Naive thymus-derived CD8-positive, alpha-beta T cell (primary cell): ENCODE measurements at regions of chr14 and their contacts with region 1.

Region 1: GRCh38 chr14:24135834-24136542 is at the start of gene PSME1:
- DNase-seq: peak; percentile 88 to 96 (median 94)
- ATAC-seq: peak; percentile 88 to 94
- H3K4me3 Mint-ChIP-seq: peak within 1 kb of the TSS; percentile 87 to 98 (median 93)
- H3K27ac Mint-ChIP-seq: peak within 1 kb of the TSS; percentile 86 to 97 (median 94)
- H3K4me1 Mint-ChIP-seq: peaks cover 34 to 69% (median 66%) of the 10 kb centered on the region in 4 donors
- H3K27me3 Mint-ChIP-seq: no peaks in the 10 kb centered on the region
- polyA plus RNA-seq, gene PSME1: 681 to 767 (median 753) TPM

Region 2: DNA sequence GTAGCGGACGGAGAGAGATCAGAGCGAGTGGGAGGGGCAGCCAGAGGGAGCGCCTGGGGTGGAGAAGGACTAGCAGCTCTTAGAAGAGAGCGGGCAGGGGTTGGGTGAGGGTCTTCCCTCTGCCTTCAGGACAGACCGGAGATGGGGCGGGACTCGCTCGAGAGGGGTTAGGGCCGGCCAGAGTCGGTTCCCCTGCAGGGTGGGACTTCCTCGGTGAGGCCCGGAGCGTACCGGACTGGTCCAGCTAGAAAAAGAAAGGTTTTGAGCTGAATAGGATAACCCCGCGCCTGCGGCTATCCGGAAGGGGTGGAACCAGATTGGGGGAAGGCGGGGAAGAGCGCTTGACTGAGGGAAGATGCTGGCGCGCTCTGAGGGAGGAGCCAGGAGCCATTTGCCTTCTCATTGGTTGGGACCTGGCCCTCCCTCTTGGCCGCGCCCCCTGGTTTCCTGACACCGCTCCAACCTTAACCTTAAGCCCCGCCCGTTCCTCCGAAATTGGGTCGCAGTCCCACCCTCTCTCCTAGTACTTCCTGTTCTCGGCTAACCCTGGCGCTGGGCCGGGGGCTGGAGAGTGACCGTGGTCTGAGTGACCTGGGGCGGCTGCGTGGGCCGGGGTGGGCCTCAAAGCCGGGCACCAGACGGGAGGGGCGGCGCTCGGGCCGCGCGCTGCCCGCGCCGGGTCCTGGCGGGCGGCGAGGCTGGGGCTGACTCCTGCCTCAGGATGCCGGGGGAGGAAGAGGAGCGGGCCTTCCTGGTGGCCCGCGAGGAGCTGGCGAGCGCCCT is 11.2 kb after region 1 on chr14 and contains the start of gene RNF31:
- POLR2A ChIA-PET with region 1: interaction called, 64 read pairs
- DNase-seq: peak; percentile 91 to 98 (median 96)
- ATAC-seq: peak; percentile 87 to 90
- H3K4me3 Mint-ChIP-seq: peak within 1 kb of the TSS; percentile 94 to 100 (median 98)
- H3K27ac Mint-ChIP-seq: peak within 1 kb of the TSS; percentile 91 to 99 (median 96)
- H3K4me1 Mint-ChIP-seq: peaks cover 22 to 71% (median 69%) of the 10 kb centered on the region in 4 donors
- H3K27me3 Mint-ChIP-seq: no peaks in the 10 kb centered on the region
- polyA plus RNA-seq, gene RNF31: 34.1 to 45.3 (median 37.6) TPM